ENCODE measurements at regions of chr1 and their contacts with region 1.

Region 1: DNA sequence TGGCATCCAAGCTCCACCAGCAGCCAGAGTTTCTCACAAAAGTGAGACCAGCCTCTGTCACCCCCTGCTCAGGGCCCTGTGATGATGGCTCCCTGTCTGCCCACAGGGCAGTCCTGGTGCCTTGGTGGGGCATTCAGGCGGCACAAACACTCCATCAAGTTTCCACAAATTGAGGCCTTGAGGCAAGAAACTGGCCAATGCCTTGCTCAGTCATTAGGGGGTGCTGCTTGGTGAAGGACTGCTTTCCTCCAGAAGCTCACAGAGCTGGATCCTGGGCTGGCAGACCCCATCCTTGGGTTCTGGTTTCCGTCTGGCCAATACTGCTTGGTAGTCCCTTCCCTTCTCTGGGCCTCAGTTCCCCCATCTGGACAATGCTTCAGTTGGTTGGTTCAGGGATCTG is 12.5 kb upstream of the AHDC1 start:
- DNase-seq: no peak
- H3K4me3 Mint-ChIP-seq: no peak overlapping the region
- H3K27ac Mint-ChIP-seq: no peak overlapping the region
- H3K4me1 Mint-ChIP-seq: peaks cover 50% of the 10 kb centered on the region
- H3K27me3 Mint-ChIP-seq: peaks cover 6% of the 10 kb centered on the region

Region 2: GRCh38 chr1:27464926-27465647 is 151.4 kb before region 1 on chr1:
- CTCF ChIA-PET with region 1: no interaction called
- DNase-seq: no peak
- H3K4me3 Mint-ChIP-seq: no peak overlapping the region
- H3K27ac Mint-ChIP-seq: no peak overlapping the region
- H3K4me1 Mint-ChIP-seq: peaks cover 19% of the 10 kb centered on the region
- H3K27me3 Mint-ChIP-seq: no peaks in the 10 kb centered on the region

Region 3: DNA sequence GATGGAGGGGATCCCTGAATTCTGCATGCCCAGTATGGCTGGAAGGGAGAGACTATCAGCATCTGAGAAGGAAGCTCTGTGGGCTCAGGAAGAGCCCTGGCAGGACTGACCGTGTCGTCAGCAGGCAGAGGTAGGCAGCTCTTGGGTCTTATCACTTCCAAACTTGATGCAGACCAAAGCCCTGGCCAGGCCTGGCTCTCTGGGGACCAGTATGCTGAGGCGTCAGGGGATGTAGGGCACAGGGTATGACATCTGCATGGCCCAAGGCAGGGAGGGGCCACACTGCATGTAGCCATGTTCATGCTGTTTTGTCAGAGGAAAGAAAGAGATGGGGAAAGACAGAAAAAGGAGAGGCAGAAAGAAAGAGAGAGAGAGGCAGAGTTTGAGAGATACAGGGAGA is 12.3 kb after region 1 on chr1:
- CTCF ChIA-PET with region 1: interaction called, 14 read pairs
- DNase-seq: no peak
- H3K4me3 Mint-ChIP-seq: no peak overlapping the region
- H3K27ac Mint-ChIP-seq: no peak overlapping the region
- H3K4me1 Mint-ChIP-seq: peaks cover 54% of the 10 kb centered on the region
- H3K27me3 Mint-ChIP-seq: peaks cover 32% of the 10 kb centered on the region